SK-N-SH (cell line): ENCODE measurements at regions of chr10 and their contacts with region 1.

Region 1: DNA sequence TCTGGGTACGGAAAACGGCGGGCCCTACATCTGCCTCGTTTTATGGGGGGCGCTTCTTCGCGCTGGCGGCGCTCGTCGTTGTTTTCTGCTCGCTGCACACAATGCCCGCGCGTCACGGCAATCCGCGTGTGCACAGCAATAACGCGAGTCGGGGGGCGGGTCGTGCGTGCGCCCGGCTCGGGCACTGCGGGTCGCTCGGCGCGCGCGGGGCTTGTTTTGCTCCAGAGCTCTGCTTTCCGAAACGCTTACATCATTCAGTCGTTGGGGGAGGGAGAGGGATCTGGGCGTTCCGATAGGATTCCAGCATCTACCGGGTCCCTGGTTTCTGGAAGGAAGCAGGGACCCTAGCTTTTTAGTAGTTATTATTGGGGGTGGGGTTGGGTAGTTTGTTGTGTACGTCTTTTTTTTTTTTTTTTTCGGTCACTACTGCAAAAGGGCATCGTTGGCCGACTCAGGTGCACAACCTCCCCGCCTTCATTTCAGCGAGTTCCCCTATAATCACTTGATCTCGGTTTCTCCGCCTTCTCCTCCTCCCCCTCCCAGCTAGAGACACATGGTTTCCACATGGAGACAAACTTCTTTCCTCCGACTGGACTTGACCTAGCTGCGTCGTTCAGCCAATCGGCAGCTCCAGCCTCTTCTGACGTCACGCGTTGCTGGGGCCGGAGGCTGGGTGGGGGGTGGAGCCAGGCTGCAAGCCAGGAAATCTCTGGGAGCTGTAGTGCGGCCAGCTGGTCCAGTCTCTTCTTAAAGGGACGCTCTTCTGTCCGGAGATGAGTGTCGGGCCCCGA is 3.5 kb downstream of the MXI1 start:
- DNase-seq: peak; percentile 95
- H3K4me3 ChIP-seq: peak overlapping the region; percentile 79 to 88
- H3K27ac ChIP-seq: peak overlapping the region; percentile 76 to 97
- H3K4me1 ChIP-seq: peaks cover 0 to 15% of the 10 kb centered on the region in 2 experiments; a peak in 3 of 4 replicates
- H3K27me3 ChIP-seq: no peaks in the 10 kb centered on the region
- CTCF ChIP-seq: no peak
- EP300 ChIP-seq: no peak
- RAD21 ChIP-seq: no peak

Region 2: GRCh38 chr10:109343293-109343692 is 867.6 kb before region 1 on chr10:
- CTCF ChIA-PET with region 1: no interaction called
- POLR2A ChIA-PET with region 1: no interaction called
- DNase-seq: no peak
- H3K4me3 ChIP-seq: no peak overlapping the region
- H3K27ac ChIP-seq: no peak overlapping the region
- H3K4me1 ChIP-seq: no peaks in the 10 kb centered on the region
- H3K27me3 ChIP-seq: no peaks in the 10 kb centered on the region
- CTCF ChIP-seq: no peak
- EP300 ChIP-seq: peak in 1 of 2 experiments; percentile 69; a peak in 2 of 4 replicates
- RAD21 ChIP-seq: no peak

Region 3: GRCh38 chr10:110192552-110192951 is 18.3 kb before region 1 on chr10:
- CTCF ChIA-PET with region 1: interaction called, 12 read pairs
- POLR2A ChIA-PET with region 1: interaction called, 4 read pairs
- DNase-seq: no peak
- H3K4me3 ChIP-seq: no peak overlapping the region
- H3K27ac ChIP-seq: no peak overlapping the region
- H3K4me1 ChIP-seq: no peaks in the 10 kb centered on the region
- H3K27me3 ChIP-seq: peaks cover 18% of the 10 kb centered on the region; the same call in 1 of the 2 replicates
- CTCF ChIP-seq: no peak
- EP300 ChIP-seq: no peak
- RAD21 ChIP-seq: no peak

Region 4: DNA sequence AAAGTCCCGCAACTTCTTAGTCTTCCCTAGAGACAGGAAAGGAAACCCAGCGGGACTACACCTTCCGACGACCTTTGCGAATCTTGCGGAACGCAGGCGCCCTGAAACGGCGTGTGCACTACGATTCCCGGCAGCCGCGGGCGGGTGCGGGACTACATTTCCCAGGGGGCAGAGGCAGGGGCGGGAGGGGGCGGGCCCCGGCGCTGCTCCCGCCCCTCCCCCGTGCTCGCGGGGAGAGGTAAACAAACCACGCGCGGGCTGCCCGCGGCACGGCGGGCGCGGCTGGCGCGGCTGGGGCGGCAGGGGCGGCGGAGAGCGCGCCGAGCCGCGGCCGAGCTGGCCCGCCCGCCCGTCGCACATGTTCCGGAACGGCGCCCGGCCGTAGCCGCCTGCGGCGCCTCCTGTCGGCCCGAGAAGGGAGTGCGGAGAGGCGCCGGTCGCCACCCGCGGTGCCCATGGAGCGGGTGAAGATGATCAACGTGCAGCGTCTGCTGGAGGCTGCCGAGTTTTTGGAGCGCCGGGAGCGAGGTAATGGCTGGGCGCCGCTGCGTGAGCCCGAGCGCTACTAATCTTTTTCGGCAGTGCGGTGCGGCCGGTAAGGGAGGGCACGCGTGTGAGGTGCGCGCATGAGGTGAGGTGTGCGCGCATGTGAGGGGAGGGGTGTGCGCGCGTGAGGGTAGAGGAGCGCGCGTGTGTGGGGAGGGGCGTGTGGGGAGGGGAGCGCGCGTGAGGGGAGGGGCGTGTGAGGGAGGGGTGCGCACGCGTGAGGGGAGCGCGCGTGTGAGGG is 15.1 kb after region 1 on chr10:
- CTCF ChIA-PET with region 1: interaction called, 22 read pairs
- POLR2A ChIA-PET with region 1: interaction called, 11 read pairs
- DNase-seq: peak; percentile 93
- H3K4me3 ChIP-seq: peak overlapping the region; percentile 71 to 83
- H3K27ac ChIP-seq: peak overlapping the region; percentile 75 to 93; a peak in 3 of 4 replicates
- H3K4me1 ChIP-seq: peaks cover 0 to 10% of the 10 kb centered on the region in 2 experiments; a peak in 2 of 4 replicates
- H3K27me3 ChIP-seq: no peaks in the 10 kb centered on the region
- CTCF ChIP-seq: peak; percentile 64
- EP300 ChIP-seq: no peak
- RAD21 ChIP-seq: peak; percentile 38

Region 5: GRCh38 chr10:110273474-110273873 is 62.6 kb after region 1 on chr10:
- CTCF ChIA-PET with region 1: interaction called, 11 read pairs
- POLR2A ChIA-PET with region 1: no interaction called
- DNase-seq: no peak
- H3K4me3 ChIP-seq: no peak overlapping the region
- H3K27ac ChIP-seq: no peak overlapping the region
- H3K4me1 ChIP-seq: peaks cover 3 to 5% of the 10 kb centered on the region in 2 experiments; a peak in 3 of 4 replicates
- H3K27me3 ChIP-seq: no peaks in the 10 kb centered on the region
- CTCF ChIP-seq: no peak
- EP300 ChIP-seq: no peak
- RAD21 ChIP-seq: no peak

Region 6: GRCh38 chr10:110279407-110279986 is 68.6 kb after region 1 on chr10:
- CTCF ChIA-PET with region 1: interaction called, 27 read pairs
- POLR2A ChIA-PET with region 1: interaction called, 4 read pairs
- DNase-seq: peak; percentile 54
- H3K4me3 ChIP-seq: no peak overlapping the region
- H3K27ac ChIP-seq: no peak overlapping the region
- H3K4me1 ChIP-seq: peaks cover 3 to 5% of the 10 kb centered on the region in 2 experiments; a peak in 1 of 4 replicates
- H3K27me3 ChIP-seq: no peaks in the 10 kb centered on the region
- CTCF ChIP-seq: peak; percentile 86
- EP300 ChIP-seq: no peak
- RAD21 ChIP-seq: peak; percentile 88

Region 7: GRCh38 chr10:111063471-111063870 is 852.6 kb after region 1 on chr10:
- CTCF ChIA-PET with region 1: no interaction called
- POLR2A ChIA-PET with region 1: no interaction called
- DNase-seq: no peak
- H3K4me3 ChIP-seq: no peak overlapping the region
- H3K27ac ChIP-seq: no peak overlapping the region
- H3K4me1 ChIP-seq: no peaks in the 10 kb centered on the region
- H3K27me3 ChIP-seq: no peaks in the 10 kb centered on the region
- CTCF ChIP-seq: no peak
- EP300 ChIP-seq: no peak
- RAD21 ChIP-seq: no peak